Activated CD4-positive, alpha-beta memory T cell treated with anti-CD3 and anti-CD28 coated beads for 36 hours (primary cell): ENCODE measurements at regions of chr15 and their contacts with region 1.

Region 1: DNA sequence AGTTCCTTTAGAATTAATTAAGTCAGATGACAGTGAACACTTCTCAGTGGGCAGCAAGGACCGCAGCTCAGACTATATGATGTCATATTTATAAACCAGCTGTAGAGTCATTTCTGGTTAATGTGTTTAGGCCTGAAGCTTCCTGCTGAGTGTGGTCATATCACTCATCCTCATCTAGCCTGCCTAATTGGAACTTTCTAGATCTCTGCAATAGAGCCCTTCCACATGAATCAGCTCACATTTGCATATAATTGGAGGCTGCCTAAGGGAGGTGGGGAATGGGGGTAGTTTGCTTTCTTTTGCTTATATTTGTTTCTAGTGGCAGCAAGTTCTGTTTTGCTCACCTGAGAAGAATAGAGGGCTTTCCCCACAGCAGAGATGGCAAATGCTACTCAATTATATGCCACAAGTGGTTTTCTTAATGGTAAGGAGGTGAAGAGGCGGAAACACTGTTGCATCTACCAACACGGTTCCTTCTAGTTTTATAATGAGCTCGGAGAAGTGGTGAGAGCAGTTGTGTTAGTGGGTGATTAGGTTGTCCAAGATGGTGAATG is 148.1 kb downstream of the KLHL25 start:
- DNase-seq: peak; percentile 58
- H3K4me3 Mint-ChIP-seq: no peak overlapping the region
- H3K27ac Mint-ChIP-seq: peak overlapping the region; percentile 90
- H3K4me1 Mint-ChIP-seq: peaks cover 65% of the 10 kb centered on the region
- H3K27me3 Mint-ChIP-seq: no peaks in the 10 kb centered on the region

Region 2: DNA sequence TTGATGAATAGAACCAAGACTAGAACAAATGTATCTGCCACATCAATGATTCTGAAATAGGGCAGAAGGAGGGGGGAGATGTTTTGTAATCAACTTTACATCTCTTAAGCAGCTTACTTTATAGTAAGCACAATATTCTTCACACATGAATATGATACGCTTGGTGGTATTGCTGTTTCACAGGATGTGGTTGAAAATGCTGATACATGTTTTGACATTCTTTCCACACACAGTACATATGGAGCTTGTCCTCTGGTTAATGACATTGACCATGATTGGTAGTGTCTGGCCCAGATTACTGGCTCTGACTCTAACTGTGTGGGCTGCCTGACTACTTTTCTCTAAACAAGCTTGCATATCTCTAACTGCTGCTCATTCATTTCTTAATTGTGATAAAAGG is 20.8 kb before region 1 on chr15:
- CTCF ChIA-PET with region 1: interaction called, 3 read pairs
- POLR2A ChIA-PET with region 1: interaction called, 12 read pairs
- intact Hi-C with region 1: loop called (anchors 1 kb)
- DNase-seq: peak; percentile 65
- H3K4me3 Mint-ChIP-seq: peak overlapping the region; percentile 33
- H3K27ac Mint-ChIP-seq: peak overlapping the region; percentile 87
- H3K4me1 Mint-ChIP-seq: peaks cover 18% of the 10 kb centered on the region
- H3K27me3 Mint-ChIP-seq: no peaks in the 10 kb centered on the region

Region 3: DNA sequence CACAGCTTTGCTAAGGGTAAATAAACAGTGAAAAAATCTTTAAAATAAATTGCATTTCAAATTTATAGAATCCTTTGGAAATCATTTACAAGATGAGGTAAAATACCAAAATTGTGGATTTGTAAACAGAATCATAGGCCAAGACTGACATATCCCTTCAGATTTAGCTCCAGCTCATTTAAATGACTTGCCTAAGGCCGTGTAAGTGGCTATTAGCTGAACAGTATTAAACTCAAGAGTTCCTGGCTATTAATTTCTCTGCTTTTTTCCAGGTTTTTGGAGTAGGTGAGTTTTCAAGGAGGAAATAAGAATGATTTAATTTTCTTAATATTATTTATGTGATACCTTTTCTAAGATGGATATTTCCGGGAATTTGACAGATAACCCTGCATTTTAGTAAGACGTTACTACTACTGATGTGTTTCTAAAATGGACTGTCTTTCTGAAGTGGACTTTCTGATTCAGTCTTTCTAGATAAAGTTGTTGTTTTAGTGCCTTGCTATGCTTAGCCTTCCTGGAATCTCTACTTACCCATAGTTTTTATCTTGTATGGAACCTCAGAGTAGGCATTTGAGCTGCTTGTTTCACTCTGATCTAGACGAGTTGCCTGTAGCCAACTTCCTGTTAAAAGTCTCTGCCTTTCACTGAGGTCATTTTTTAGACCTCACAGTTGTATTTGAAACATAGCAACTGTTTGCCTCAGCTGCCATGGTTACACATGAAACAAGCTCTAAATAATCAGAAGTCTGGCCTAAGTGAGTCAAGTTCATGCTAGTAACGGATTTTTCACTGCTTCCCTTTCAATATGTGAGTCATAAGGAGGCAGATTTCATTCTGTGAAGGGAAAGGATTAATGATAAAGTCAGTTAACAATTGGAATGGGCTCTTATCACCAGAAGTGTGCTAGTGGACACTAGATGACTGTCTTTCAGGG is 21.1 kb after region 1 on chr15:
- CTCF ChIA-PET with region 1: interaction called, 3 read pairs
- POLR2A ChIA-PET with region 1: interaction called, 10 read pairs
- intact Hi-C with region 1: loop called (anchors 1 kb)
- DNase-seq: peak; percentile 62
- H3K4me3 Mint-ChIP-seq: peak overlapping the region; percentile 20
- H3K27ac Mint-ChIP-seq: peak overlapping the region; percentile 95
- H3K4me1 Mint-ChIP-seq: peaks cover 33% of the 10 kb centered on the region
- H3K27me3 Mint-ChIP-seq: no peaks in the 10 kb centered on the region

Region 4: DNA sequence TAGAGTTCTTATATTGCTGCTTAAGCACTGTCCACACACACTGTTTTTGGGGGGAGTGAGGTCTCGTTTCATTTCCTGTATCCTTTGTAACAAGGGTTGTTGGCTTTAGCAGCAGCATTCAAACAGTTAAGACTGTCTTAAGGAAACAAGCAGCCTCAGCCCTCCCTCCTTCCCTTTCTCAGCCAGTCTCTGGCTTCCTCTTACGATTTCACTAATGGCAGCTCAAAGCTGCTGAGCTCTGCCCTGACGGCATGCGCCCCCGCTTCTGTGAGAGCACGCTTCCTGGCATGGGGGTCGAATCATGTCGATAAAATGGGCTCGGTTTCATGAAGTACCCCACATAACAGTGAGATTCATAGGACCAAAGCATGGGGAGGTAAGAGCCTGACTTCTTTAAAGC is 43.1 kb after region 1 on chr15:
- CTCF ChIA-PET with region 1: interaction called, 3 read pairs
- POLR2A ChIA-PET with region 1: interaction called, 7 read pairs
- intact Hi-C with region 1: loop called (anchors 1 kb)
- DNase-seq: peak; percentile 78
- H3K4me3 Mint-ChIP-seq: peak overlapping the region; percentile 81
- H3K27ac Mint-ChIP-seq: peak overlapping the region; percentile 98
- H3K4me1 Mint-ChIP-seq: peaks cover 78% of the 10 kb centered on the region
- H3K27me3 Mint-ChIP-seq: no peaks in the 10 kb centered on the region